Mammary epithelial cell (primary cell): ENCODE measurements at regions of chr2 and their contacts with region 1.

Region 1: GRCh38 chr2:170690640-170691039 is 24.5 kb upstream of the SP5 start:
- DNase-seq: no peak
- H3K4me3 ChIP-seq: no peak overlapping the region
- H3K27ac ChIP-seq: no peak overlapping the region
- H3K4me1 ChIP-seq: no peaks in the 10 kb centered on the region
- H3K27me3 ChIP-seq: no peaks in the 10 kb centered on the region
- CTCF ChIP-seq: no peak

Region 2: GRCh38 chr2:170434900-170435621 is 255.6 kb before region 1 on chr2:
- CTCF ChIA-PET with region 1: no interaction called
- dilution Hi-C with region 1: no loop called
- in situ Hi-C with region 1: no loop called
- intact Hi-C with region 1: no loop called
- DNase-seq: no peak
- H3K4me3 ChIP-seq: no peak overlapping the region
- H3K27ac ChIP-seq: no peak overlapping the region
- H3K4me1 ChIP-seq: no peaks in the 10 kb centered on the region
- H3K27me3 ChIP-seq: peaks cover 5% of the 10 kb centered on the region
- CTCF ChIP-seq: no peak

Region 3: DNA sequence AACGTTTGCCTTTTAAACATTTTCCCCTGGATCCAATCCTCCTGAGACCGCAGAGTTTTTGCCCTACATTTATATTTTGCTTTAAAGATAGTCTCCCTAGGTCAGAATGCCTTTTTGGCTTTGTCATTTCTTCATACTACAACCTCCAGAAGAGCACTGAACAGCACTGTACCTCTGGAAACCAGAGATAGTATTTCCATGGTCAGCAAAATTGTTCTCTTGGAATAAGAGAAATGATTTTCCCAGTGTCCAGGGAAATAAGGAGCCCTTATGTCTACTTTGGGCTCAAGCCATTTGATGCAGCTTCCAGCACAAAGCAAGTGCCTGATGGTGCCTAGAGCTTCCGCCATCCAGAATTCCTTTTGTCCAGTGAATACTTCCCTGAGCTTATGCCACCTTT is 51.0 kb before region 1 on chr2:
- CTCF ChIA-PET with region 1: no interaction called
- dilution Hi-C with region 1: loop called (anchors 5 kb)
- in situ Hi-C with region 1: no loop called
- intact Hi-C with region 1: no loop called
- DNase-seq: no peak
- H3K4me3 ChIP-seq: no peak overlapping the region
- H3K27ac ChIP-seq: no peak overlapping the region
- H3K4me1 ChIP-seq: no peaks in the 10 kb centered on the region
- H3K27me3 ChIP-seq: peaks cover 4% of the 10 kb centered on the region
- CTCF ChIP-seq: no peak

Region 4: GRCh38 chr2:170739048-170739447 is 48.4 kb after region 1 on chr2:
- CTCF ChIA-PET with region 1: no interaction called
- dilution Hi-C with region 1: no loop called
- in situ Hi-C with region 1: no loop called
- intact Hi-C with region 1: no loop called
- DNase-seq: peak; percentile 96
- H3K4me3 ChIP-seq: no peak overlapping the region
- H3K27ac ChIP-seq: peak overlapping the region; percentile 98
- H3K4me1 ChIP-seq: peaks cover 31% of the 10 kb centered on the region
- H3K27me3 ChIP-seq: no peaks in the 10 kb centered on the region
- CTCF ChIP-seq: no peak